A549 (cell line): ENCODE measurements at regions of chr14 and their contacts with region 1.

Region 1: DNA sequence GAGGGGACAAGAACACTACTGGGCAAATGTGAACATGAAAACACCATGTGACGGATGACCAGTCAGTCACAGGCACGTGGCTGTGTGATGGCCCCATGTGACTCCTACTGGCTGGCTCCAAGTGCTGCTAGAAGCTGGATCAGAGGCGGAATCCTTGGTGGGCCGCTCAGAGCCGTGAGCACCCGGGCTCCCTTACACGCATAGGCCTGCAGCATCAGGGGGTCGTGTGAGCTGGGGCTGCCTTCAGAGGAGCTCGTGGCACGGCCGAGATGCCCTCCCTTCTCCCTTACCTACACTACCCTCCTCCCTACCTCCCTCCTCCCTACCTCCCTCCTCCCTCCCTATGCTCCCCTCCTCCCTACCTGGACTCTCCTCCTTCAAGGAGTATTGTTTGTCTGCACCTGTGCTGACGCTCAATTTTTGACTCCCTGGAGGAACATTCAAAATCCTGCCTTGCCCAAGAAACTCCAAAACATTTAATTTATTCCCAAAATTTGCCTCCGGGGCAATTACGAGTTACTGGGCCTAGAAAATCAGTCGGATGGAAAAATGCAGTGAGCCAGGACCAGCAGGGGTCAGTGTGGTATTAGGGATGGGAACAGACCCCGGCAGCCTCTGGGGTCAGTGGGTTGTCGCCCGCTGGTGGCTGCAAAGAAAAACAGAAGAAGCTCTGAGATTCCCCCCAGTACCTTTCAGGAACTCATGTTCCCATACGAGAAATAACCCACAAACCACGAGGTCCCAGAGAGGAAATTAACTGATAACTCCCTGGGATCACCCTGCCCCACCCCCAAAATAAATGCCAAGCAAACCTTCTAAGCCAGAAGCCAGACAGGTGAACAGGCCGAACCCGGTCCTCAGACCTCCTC is 61.2 kb downstream of the C14orf132 start:
- DNase-seq: peak; percentile 82 to 87
- ATAC-seq: peak; percentile 17 to 65; a peak in 4 of 6 replicates
- H3K4me3 ChIP-seq: no peak overlapping the region
- H3K27ac ChIP-seq: peak overlapping the region; percentile 86 to 88; a peak in 5 of 6 replicates
- H3K4me1 ChIP-seq: peaks cover 58% of the 10 kb centered on the region
- CTCF ChIP-seq: peak; percentile 100
- EP300 ChIP-seq: no peak
- POLR2A ChIP-seq: no peak
- RAD21 ChIP-seq: peak; percentile 100

Region 2: DNA sequence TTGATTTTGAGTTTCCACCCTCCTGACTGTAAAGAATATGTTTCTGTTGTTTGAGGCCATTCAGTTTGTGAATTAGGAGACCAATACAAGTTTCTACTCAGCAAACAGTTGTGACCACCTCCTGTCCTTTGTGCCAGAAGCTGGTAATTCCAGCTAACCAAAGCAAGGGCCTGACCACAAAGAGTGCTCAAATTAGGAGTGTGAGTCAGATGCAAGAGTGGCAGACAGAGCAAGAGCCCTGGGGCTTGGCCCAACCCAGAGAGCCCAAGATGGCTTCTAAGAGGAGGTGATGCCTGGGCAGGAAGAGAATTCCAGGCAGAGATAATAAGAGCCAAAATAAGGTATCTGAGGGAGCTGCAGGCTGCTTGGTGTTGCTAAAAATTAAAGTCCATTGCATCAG is 138.9 kb before region 1 on chr14:
- CTCF ChIA-PET with region 1: no interaction called
- POLR2A ChIA-PET with region 1: no interaction called
- DNase-seq: no peak
- ATAC-seq: peak in 1 of 2 experiments; percentile 39; a peak in 1 of 6 replicates
- H3K4me3 ChIP-seq: no peak overlapping the region
- H3K27ac ChIP-seq: no peak overlapping the region
- H3K4me1 ChIP-seq: no peaks in the 10 kb centered on the region
- CTCF ChIP-seq: no peak
- EP300 ChIP-seq: no peak
- POLR2A ChIP-seq: no peak
- RAD21 ChIP-seq: no peak

Region 3: GRCh38 chr14:95993768-95994592 is 106.4 kb before region 1 on chr14:
- CTCF ChIA-PET with region 1: interaction called, 280 read pairs
- POLR2A ChIA-PET with region 1: no interaction called
- DNase-seq: peak; percentile 41 to 52
- ATAC-seq: peak; percentile 50 to 79; a peak in 4 of 6 replicates
- H3K4me3 ChIP-seq: no peak overlapping the region
- H3K27ac ChIP-seq: no peak overlapping the region
- H3K4me1 ChIP-seq: no peaks in the 10 kb centered on the region
- CTCF ChIP-seq: peak; percentile 88
- EP300 ChIP-seq: no peak
- POLR2A ChIP-seq: no peak
- RAD21 ChIP-seq: peak; percentile 91

Region 4: DNA sequence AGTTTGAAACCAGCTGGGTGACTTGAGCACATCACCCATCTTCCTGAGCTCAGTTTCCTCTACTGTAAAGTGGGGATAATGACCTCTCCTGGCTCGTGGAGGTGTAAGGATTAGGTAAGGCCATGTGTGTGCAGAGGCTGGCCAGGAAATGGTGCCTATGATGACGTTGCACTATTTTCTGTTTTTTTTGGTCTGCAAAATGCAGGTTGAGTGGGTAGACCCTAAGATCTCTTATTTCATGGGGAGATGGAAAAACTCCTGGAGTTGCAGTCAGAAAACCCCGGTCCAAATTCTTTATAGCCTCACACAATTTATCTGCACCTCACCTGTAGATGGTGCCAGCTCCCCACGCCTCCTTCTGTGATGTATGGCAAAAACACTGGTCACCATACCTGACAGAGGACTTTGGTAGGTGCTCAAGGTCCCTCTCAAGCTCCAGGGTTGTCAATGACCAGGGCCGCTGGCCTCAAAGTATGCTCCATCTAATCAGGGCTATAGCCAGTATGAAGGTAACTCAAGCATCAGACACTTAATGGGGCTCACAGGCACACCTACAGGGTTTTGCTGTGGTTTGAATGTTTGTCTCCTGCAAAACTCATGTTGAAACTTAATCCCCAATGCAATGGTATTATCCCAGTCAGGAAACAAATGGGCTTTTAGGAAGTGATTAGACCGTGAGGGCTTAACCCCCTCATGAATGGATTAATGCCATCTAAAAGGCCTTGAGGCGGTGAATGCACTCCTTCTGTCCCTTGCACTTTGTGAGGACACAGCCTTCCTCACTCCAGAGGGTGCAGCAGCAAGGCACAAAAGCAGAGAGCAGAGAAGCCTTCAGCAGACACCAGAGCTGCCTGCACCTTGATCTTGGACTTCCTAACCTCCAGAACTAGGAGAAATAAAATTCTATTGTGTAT is 43.6 kb before region 1 on chr14:
- CTCF ChIA-PET with region 1: interaction called, 27 read pairs
- POLR2A ChIA-PET with region 1: no interaction called
- DNase-seq: no peak
- ATAC-seq: 0 out of 6 replicates have a peak, but pooled peaks of 1 of the 2 experiments have one; percentile 19
- H3K4me3 ChIP-seq: no peak overlapping the region
- H3K27ac ChIP-seq: no peak overlapping the region
- H3K4me1 ChIP-seq: peaks cover 18% of the 10 kb centered on the region; the same call in 2 of the 3 replicates
- CTCF ChIP-seq: peak; percentile 50; the same call in 2 of the 3 replicates
- EP300 ChIP-seq: no peak
- POLR2A ChIP-seq: no peak
- RAD21 ChIP-seq: peak; percentile 63 to 66

Region 5: DNA sequence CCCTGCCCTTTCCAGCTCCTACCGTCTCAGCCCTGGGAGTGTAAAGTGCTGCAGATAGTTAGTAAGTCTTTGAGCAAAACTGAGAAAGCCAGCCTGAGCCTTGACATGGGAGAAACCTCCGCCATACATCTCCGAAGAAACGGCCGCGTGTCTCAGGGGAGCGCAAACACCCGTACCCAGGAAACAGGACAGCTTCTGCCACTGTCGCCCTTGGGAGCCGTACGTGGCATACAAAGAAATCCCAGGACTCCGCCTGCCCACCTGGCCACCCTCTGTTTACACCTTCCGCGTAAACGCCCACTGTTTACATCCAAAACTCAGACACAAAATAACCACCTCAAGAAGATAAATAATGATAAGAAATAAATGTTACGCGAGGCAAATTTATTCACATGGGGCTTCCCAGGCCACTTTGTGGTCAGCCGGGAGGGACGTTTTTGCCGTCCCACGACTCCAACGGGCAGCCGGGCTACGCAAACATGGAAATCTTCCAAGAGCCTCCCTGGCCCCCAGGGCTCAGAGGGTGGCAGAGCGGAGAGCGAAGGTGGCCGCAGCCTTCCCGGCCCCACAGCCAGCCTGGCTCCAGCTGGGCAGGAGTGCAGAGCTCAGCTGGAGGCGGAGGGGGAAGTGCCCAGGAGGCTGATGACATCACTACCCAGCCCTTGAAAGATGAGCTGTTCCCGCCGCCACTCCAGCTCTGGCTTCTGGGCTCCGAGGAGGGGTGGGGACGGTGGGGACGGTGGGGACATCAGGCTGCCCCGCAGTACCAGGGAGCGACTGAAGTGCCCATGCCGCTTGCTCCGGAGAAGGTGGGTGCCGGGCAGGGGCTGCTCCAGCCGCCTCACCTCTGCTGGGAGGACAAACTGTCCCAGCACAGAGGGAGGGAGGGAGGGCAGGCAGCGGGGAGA is 104.0 kb after region 1 on chr14 and contains the start of gene BDKRB2:
- CTCF ChIA-PET with region 1: interaction called, 12 read pairs
- POLR2A ChIA-PET with region 1: interaction called, 5 read pairs
- DNase-seq: peak; percentile 76 to 94
- ATAC-seq: peak; percentile 94 to 96
- H3K4me3 ChIP-seq: peak within 1 kb of the TSS; percentile 76
- H3K27ac ChIP-seq: peak within 1 kb of the TSS; percentile 85 to 88
- H3K4me1 ChIP-seq: peaks cover 40% of the 10 kb centered on the region
- CTCF ChIP-seq: no peak
- EP300 ChIP-seq: peak in 1 of 2 experiments; percentile 43; a peak in 2 of 5 replicates
- POLR2A ChIP-seq: peak; percentile 43
- RAD21 ChIP-seq: peak in 1 of 2 experiments; percentile 49; a peak in 3 of 5 replicates
- polyA plus RNA-seq, gene BDKRB2: 21.6 and 26.6 TPM in 2 replicates

Region 6: DNA sequence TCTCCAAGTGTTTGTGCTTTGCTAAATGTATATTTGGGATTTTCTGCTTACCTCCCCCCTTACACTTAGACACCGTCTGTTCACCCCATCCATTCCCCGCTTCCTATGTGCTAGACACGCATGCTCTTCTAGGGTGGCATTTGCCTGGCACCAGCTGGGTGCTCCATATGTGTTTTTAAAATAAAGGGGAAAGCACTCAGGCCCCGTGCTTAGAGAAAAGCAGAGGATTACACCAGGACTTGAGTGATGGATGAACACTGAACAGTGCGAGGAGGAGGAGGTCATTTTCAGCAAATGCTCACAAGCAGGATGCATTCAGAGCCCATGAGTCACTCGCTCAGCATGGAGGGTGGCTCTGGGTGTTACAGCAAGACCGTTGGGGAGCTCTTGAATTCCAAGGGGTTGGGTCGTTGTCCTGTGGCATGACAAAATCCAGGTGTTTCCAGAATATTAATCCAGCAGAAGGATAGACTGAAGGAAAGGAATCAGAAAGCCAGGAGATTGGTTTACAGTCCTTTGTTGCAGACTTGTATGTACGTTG is 152.7 kb after region 1 on chr14:
- CTCF ChIA-PET with region 1: interaction called, 21 read pairs
- POLR2A ChIA-PET with region 1: no interaction called
- DNase-seq: peak; percentile 64 to 69
- ATAC-seq: peak; percentile 67 to 86; a peak in 4 of 6 replicates
- H3K4me3 ChIP-seq: no peak overlapping the region
- H3K27ac ChIP-seq: peak overlapping the region; percentile 72 to 91
- H3K4me1 ChIP-seq: peaks cover 64% of the 10 kb centered on the region
- CTCF ChIP-seq: no peak
- EP300 ChIP-seq: peak in 1 of 2 experiments; percentile 44; a peak in 2 of 5 replicates
- POLR2A ChIP-seq: no peak
- RAD21 ChIP-seq: no peak

Region 7: DNA sequence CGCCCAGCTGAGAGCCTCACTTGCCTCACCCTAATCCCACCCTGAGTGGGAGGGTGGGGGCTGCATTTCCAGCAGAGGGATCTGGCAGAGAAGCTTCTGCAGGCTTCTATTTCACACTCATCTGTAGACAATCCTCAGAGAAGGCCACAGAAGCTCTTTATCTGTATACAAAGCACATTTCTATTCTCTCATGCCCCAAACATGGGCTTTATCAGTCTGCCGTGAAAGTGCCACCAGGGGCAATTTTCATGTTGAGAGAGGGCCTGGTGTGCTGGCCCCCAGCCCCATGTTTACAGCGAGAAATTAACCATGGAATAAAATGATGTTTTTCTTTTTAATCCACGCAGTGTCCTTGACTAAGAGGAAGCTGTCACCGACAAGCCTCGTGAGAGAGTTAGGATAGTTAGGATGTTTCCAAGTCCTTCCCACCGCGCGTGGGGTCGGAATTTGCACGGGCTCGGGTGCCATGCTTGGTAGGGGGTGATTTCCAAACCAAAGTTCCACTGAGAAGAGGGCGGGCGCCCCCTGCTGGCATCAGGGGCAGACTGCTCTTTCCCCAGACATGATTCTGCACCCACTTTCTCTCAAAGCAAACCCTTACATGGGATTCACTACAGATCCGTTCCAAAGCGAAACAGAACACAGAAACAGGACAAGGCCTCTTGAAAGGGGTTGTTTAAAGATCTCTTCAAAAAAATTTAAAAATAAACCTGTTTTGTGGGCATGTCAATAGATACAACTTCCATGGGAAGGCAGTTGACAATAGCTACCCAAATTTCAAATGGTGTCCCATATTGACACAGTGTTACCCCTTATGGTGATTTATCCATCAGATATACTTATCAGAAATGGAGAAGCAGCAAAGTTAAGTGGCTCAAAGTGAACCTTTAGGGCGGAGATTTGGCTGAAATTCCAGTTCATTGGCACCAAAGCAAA is 175.1 kb after region 1 on chr14:
- CTCF ChIA-PET with region 1: interaction called, 486 read pairs
- POLR2A ChIA-PET with region 1: no interaction called
- DNase-seq: peak; percentile 67 to 76
- ATAC-seq: peak; percentile 77 to 80
- H3K4me3 ChIP-seq: no peak overlapping the region
- H3K27ac ChIP-seq: peak overlapping the region; percentile 69 to 92
- H3K4me1 ChIP-seq: peaks cover 39% of the 10 kb centered on the region
- CTCF ChIP-seq: peak; percentile 98
- EP300 ChIP-seq: no peak
- POLR2A ChIP-seq: no peak
- RAD21 ChIP-seq: peak; percentile 99